ENCODE measurements at regions of chr18 and their contacts with region 1.

Region 1: DNA sequence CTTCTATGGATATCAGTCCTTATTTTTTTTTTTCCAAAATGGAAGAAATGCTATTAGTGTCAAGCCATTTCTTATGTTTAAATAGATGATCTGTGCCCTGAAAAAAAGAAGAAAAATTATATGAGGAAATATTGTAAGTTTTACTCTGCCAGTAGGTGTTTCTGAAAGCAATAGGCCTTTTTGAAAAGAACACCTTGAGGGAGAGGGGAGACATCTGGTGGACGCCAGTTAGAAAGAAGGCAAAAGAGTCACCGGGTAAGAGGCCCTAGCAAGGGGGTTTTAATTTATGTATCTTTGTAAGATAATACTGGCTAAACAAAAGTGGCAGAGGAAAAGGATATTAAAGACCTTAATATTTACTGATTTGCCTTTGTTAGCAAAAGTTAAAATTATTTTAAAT is 56.1 kb downstream of the DYNAP start:
- DNase-seq: no peak
- H3K4me3 ChIP-seq: no peak overlapping the region
- H3K27ac ChIP-seq: no peak overlapping the region
- H3K4me1 ChIP-seq: peaks cover 0 to 3% (median 0%) of the 10 kb centered on the region in 3 donors
- H3K27me3 ChIP-seq: no peaks in the 10 kb centered on the region
- CTCF ChIP-seq: peak in 5 of 6 experiments; percentile 20 to 65 (median 49)
- POLR2A ChIP-seq: no peak

Region 2: DNA sequence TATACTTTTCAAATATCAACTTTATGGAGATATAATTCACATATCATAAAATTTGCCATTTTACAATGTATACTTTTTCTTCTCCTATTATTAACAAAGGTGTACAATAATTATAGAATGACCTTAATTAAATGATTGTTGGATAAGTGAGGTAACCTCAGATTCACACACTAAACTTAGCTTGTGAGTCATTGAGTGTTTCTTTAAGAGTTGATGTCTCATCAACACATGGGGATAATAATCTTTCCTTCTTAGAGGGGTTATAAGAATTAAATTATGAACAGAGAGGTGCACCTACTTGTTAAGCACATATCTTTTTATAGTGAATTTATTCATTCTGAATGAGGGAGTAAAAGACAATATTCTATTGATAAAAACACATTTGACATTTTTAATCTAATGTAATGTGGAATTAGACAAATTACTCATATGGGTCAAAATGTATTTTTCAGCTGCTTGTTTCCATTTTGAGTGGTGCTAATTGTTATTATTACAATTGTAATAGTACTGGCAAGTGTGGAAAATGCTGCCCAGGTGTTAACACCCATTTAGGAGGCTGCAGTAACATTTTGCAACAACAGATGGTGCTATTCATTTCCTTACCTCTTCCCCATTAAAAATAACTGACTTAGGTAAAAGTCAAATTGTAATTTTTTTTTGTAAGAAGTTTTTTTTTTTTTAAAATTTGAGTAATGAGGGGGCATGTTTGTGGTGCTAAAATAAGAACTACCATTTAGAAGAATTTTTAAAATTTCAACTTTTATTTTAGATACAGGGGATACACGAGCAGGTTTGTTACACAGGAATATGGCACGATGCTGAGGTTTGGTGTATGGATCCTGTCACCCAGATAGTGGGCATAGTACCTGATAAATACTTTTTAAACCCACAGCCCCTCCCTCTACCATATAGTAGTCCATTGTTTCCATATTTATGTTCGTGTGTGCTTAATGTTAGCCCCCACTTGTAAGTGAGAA is 88.3 kb before region 1 on chr18:
- intact Hi-C with region 1: loop called (anchors 10 kb)
- DNase-seq: no peak
- H3K4me3 ChIP-seq: no peak overlapping the region
- H3K27ac ChIP-seq: no peak overlapping the region
- H3K4me1 ChIP-seq: no peaks in the 10 kb centered on the region
- H3K27me3 ChIP-seq: no peaks in the 10 kb centered on the region
- CTCF ChIP-seq: peak; percentile 21 to 79 (median 66)
- POLR2A ChIP-seq: no peak

Region 3: GRCh38 chr18:54752185-54752584 is 105.0 kb after region 1 on chr18:
- intact Hi-C with region 1: no loop called
- DNase-seq: no peak
- H3K4me3 ChIP-seq: no peak overlapping the region
- H3K27ac ChIP-seq: no peak overlapping the region
- H3K4me1 ChIP-seq: no peaks in the 10 kb centered on the region
- H3K27me3 ChIP-seq: no peaks in the 10 kb centered on the region
- CTCF ChIP-seq: no peak
- POLR2A ChIP-seq: no peak